ENCODE measurements at regions of chr12 and their contacts with region 1.

Region 1: GRCh38 chr12:26748741-26749431 is 84.1 kb downstream of the ITPR2 start:
- DNase-seq: peak; percentile 81
- H3K4me3 ChIP-seq: peak overlapping the region in 1 of 3 experiments; percentile 42
- H3K27ac ChIP-seq: peak overlapping the region; percentile 77
- H3K4me1 ChIP-seq: peaks cover 57% of the 10 kb centered on the region
- H3K27me3 ChIP-seq: no peaks in the 10 kb centered on the region
- CTCF ChIP-seq: no peak
- POLR2A ChIP-seq: no peak

Region 2: GRCh38 chr12:26732005-26732908 is 16.6 kb before region 1 on chr12:
- CTCF ChIA-PET with region 1: interaction called, 4 read pairs
- POLR2A ChIA-PET with region 1: no interaction called
- dilution Hi-C with region 1: no loop called
- intact Hi-C with region 1: loop called (anchors 2 kb)
- DNase-seq: no peak
- H3K4me3 ChIP-seq: no peak overlapping the region
- H3K27ac ChIP-seq: no peak overlapping the region
- H3K4me1 ChIP-seq: peaks cover 37% of the 10 kb centered on the region
- H3K27me3 ChIP-seq: no peaks in the 10 kb centered on the region
- CTCF ChIP-seq: no peak
- POLR2A ChIP-seq: no peak

Region 3: DNA sequence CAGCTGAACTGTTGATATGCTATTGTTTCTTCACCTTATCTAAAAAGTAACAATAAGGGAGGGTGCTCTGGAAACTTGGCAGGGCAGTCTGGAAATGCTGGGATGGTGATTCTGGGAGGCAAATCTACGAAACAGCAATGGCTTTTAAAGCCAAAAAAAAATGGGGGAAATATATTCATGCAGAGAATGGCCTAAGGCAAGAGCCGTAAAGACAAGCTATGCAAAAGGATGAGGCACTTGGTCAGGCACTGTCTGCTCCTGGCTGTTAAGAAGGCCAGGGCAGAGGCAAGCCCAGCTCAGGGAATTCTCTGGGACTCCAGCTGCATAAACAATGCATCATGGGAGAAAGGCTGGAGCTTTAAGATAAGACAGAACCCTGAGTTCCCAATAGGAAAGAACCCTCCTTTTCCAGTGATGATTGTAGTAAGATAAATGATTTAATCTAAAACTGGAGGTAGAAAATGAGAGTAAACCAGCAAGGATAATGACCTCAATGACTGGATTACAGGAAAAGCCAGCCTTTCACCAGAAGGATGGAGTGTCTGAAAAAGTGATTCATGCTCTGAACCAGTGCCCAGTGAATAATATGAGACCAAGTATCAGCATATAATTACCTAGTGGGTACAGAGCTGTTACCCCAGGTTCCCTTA is 38.1 kb after region 1 on chr12:
- CTCF ChIA-PET with region 1: no interaction called
- POLR2A ChIA-PET with region 1: no interaction called
- dilution Hi-C with region 1: no loop called
- intact Hi-C with region 1: loop called (anchors 2 kb)
- DNase-seq: peak; percentile 96
- H3K4me3 ChIP-seq: no peak overlapping the region
- H3K27ac ChIP-seq: peak overlapping the region; percentile 85
- H3K4me1 ChIP-seq: peaks cover 39% of the 10 kb centered on the region
- H3K27me3 ChIP-seq: no peaks in the 10 kb centered on the region
- CTCF ChIP-seq: no peak
- POLR2A ChIP-seq: no peak